ENCODE measurements at regions of chr22 and their contacts with region 1.

Region 1: DNA sequence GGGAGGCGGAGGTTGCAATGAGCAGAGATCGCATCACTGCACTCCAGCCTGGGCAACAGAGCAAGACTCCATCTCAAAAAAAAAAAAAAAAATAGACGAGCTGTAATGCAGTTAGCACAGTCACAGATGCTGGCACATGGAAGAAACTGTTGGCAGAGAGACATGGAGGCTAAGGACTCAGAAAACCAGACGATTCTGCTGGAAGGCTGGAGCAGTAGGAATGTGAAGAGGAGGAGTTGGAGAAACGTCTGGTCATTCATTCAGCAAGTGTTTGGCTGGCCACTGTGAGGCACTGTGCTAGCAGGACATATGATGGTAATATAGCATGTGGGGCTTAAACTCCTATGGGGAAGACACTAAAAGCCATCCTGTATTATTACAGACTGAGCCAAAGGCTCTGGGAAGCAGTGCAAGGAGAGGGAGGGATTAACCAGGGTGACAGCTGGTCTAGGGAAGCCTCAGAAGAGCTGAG is 5.0 kb downstream of the UQCR10 start:
- DNase-seq: no peak
- H3K4me3 Mint-ChIP-seq: no peak overlapping the region
- H3K27ac Mint-ChIP-seq: peak overlapping the region; percentile 78
- H3K4me1 Mint-ChIP-seq: peaks cover 33% of the 10 kb centered on the region
- H3K27me3 Mint-ChIP-seq: no peaks in the 10 kb centered on the region
- CTCF ChIP-seq: no peak

Region 2: GRCh38 chr22:29344137-29344536 is 428.1 kb before region 1 on chr22:
- CTCF ChIA-PET with region 1: no interaction called
- intact Hi-C with region 1: no loop called
- DNase-seq: peak; percentile 38
- H3K4me3 Mint-ChIP-seq: no peak overlapping the region
- H3K27ac Mint-ChIP-seq: no peak overlapping the region
- H3K4me1 Mint-ChIP-seq: no peaks in the 10 kb centered on the region
- H3K27me3 Mint-ChIP-seq: no peaks in the 10 kb centered on the region
- CTCF ChIP-seq: no peak

Region 3: DNA sequence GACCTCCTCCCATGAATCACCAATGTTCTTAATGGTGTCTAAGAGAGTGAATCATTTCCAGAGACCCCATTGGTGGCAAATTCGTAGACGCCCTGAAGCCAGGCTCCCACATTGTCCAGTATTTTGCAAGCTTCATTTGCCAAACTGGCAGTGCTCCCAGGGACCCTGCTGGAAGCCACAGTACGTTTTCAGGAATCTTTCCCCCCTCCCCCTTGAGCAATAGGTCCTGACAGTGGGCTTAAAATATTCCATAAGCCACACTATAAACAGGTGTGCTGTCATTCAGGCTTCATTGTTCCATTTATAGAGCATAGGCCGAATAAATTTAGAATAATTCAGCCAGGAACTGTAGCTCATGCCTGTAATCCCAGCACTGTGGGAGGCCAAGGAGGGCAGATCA is 1071.0 kb after region 1 on chr22:
- CTCF ChIA-PET with region 1: interaction called, 11 read pairs
- intact Hi-C with region 1: no loop called
- DNase-seq: no peak
- H3K4me3 Mint-ChIP-seq: no peak overlapping the region
- H3K27ac Mint-ChIP-seq: no peak overlapping the region
- H3K4me1 Mint-ChIP-seq: peaks cover 14% of the 10 kb centered on the region
- H3K27me3 Mint-ChIP-seq: no peaks in the 10 kb centered on the region
- CTCF ChIP-seq: no peak